ENCODE measurements at regions of chr6 and their contacts with region 1.

Region 1: GRCh38 chr6:16514249-16514648 is 247.0 kb downstream of the ATXN1 start:
- H3K4me3 ChIP-seq: no peak overlapping the region
- H3K27ac ChIP-seq: no peak overlapping the region
- H3K4me1 ChIP-seq: peaks cover 19% of the 10 kb centered on the region
- CTCF ChIP-seq: peak; percentile 29; the same call in 1 of the 2 replicates

Region 2: DNA sequence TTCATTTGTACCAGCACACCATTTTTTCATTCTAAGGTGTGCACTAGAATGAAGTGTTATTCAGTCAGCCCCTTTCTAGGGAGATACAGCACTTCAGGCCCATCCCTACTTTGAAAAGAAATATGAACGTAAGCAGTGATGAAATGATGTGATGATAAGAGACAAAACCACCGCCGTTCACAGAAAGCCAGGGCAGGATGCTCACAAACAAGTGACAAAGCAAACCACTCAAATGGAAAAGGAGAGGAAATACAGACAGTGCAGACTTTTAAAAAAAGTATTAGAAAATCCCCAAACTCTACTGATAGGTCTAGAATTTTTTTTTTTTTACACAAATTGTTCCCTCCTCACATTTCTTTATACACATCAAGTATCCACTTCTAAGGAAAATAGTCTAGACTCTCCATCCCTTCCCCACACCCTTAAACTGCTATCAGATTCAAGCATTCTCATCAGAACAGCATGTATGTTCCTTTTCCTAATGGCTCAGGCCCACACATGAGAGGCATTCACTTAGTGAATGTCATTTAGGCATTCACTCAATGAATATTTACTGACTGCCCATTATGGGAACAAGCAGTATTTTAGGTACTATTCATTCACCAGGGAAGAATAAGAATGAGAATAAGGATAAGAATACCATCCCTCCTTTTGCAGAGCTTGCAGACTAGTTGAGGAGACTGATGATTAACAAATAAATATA is 32.4 kb before region 1 on chr6:
- CTCF ChIA-PET with region 1: interaction called, 10 read pairs
- POLR2A ChIA-PET with region 1: no interaction called
- H3K4me3 ChIP-seq: no peak overlapping the region
- H3K27ac ChIP-seq: no peak overlapping the region
- H3K4me1 ChIP-seq: no peaks in the 10 kb centered on the region
- CTCF ChIP-seq: no peak

Region 3: GRCh38 chr6:16494793-16495192 is 19.5 kb before region 1 on chr6:
- CTCF ChIA-PET with region 1: interaction called, 52 read pairs
- POLR2A ChIA-PET with region 1: no interaction called
- H3K4me3 ChIP-seq: no peak overlapping the region
- H3K27ac ChIP-seq: no peak overlapping the region
- H3K4me1 ChIP-seq: peaks cover 8% of the 10 kb centered on the region; the same call in 1 of the 2 replicates
- CTCF ChIP-seq: no peak

Region 4: DNA sequence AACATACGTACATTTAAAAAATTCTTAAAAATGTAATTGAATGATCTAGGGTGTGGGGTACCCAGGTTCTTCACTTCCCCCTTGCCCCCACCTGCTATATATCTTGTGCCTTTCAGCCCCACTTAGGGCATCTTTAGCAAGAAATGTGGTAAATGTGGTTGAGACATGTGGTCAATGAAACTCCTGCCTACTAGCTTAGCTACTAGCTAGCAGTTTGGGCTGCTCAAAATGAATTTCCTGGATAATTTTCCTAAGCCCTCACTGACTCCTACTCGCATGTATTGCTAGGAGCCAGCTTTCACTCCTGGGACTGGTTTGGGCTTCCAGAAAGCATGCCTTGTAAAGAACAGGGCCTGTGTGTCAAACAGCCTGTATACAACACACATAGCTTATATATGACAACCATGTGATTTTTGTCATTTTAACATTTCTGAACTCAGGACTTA is 10.3 kb before region 1 on chr6:
- CTCF ChIA-PET with region 1: interaction called, 52 read pairs
- POLR2A ChIA-PET with region 1: no interaction called
- H3K4me3 ChIP-seq: no peak overlapping the region
- H3K27ac ChIP-seq: no peak overlapping the region
- H3K4me1 ChIP-seq: no peaks in the 10 kb centered on the region
- CTCF ChIP-seq: no peak